ENCODE measurements at regions of chr11 and their contacts with region 1.

Region 1: GRCh38 chr11:111422494-111423249 is 43.6 kb upstream of the POU2AF1 start:
- DNase-seq: peak; percentile 37
- ATAC-seq: peak; percentile 97
- H3K4me3 ChIP-seq: no peak overlapping the region
- H3K27ac ChIP-seq: no peak overlapping the region
- H3K4me1 ChIP-seq: peaks cover 0 to 10% of the 10 kb centered on the region in 2 experiments; a peak in 2 of 4 replicates
- H3K27me3 ChIP-seq: no peaks in the 10 kb centered on the region
- CTCF ChIP-seq: peak; percentile 88 to 94 (median 93)
- POLR2A ChIP-seq: no peak
- RAD21 ChIP-seq: peak; percentile 93

Region 2: DNA sequence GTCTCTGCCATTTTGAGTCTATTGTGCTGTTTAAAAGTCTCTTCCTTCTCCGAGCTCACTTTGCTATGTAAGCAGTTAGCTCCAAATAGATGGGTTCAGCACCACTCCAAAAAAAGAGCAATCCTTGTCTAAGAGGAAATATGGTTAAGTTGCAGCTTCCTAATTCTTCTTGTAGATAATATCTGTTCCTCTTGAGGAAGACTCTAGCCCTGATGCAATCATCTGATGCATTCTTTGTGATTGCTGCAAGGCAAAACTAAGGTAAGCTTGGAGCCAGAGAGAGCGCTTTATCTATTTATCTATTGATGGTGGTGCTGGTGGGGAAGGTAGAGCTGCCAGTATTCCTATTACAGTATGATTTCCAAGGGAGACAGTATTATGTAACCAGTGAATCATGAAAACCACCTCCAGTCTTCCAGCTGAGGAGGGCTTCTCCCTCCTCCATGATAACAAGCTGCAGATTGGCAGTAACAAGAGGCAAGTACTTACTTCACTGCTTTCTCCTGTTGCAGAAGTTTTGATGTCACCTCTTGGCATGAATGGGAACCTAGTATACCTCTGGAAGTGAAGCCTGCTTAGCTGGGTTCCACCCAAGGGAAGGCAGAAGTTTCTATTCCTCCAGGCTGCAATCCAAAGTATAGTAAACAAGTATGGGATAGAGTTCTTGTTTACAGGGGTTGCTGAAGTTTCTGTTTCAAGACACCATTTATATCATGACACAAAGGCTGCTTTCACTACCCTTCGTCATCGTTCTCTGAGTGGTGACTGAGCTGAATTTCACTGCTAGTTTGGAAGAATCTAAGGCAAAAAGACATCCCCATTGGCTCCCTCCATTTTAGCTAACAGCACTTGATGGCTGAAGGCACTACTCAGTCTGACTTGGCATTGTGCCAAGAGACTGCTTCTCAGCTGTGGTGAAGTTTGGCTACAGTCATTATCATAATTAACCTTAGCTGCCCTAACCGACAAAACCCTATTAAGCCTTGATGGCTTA is 943.3 kb before region 1 on chr11:
- CTCF ChIA-PET with region 1: no interaction called
- POLR2A ChIA-PET with region 1: no interaction called
- RAD21 ChIA-PET with region 1: no interaction called
- intact Hi-C with region 1: loop called (anchors 10 kb)
- DNase-seq: no peak
- ATAC-seq: no peak
- H3K4me3 ChIP-seq: no peak overlapping the region
- H3K27ac ChIP-seq: no peak overlapping the region
- H3K4me1 ChIP-seq: peaks cover 0 to 4% of the 10 kb centered on the region in 2 experiments; a peak in 1 of 4 replicates
- H3K27me3 ChIP-seq: no peaks in the 10 kb centered on the region
- CTCF ChIP-seq: no peak
- POLR2A ChIP-seq: no peak
- RAD21 ChIP-seq: no peak

Measured in HCT116 (cell line).